PC-9 (cell line): ENCODE measurements at regions of chr18 and their contacts with region 1.

Region 1: GRCh38 chr18:65786422-65786948 is 35.7 kb downstream of the CDH7 start:
- DNase-seq: no peak
- H3K4me3 ChIP-seq: no peak overlapping the region
- H3K27ac ChIP-seq: no peak overlapping the region
- H3K4me1 ChIP-seq: no peaks in the 10 kb centered on the region
- H3K27me3 ChIP-seq: no peaks in the 10 kb centered on the region
- CTCF ChIP-seq: no peak

Region 2: GRCh38 chr18:65721619-65722018 is 64.9 kb before region 1 on chr18:
- CTCF ChIA-PET with region 1: no interaction called
- POLR2A ChIA-PET with region 1: no interaction called
- intact Hi-C with region 1: no loop called
- DNase-seq: no peak
- H3K4me3 ChIP-seq: no peak overlapping the region
- H3K27ac ChIP-seq: no peak overlapping the region
- H3K4me1 ChIP-seq: no peaks in the 10 kb centered on the region
- H3K27me3 ChIP-seq: no peaks in the 10 kb centered on the region
- CTCF ChIP-seq: no peak

Region 3: DNA sequence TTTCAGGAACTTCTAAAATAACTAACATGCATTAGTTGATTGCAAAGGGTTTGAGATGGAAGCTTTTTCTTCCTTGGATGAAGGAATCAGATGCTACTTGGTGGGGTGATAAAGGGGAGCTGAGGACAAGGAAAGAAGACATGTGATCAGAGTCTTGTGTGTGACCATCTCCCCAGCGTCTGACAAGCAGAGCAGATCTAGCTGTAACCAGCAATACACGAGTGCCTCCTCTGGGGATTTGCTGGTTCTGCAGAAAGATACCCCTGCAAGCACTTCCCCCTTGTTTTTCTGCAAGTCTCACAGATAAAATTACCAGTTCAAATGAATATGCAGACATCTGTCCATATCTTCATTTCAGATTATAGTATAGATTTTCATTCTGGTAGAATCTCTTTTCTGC is 33.0 kb before region 1 on chr18:
- CTCF ChIA-PET with region 1: no interaction called
- POLR2A ChIA-PET with region 1: no interaction called
- intact Hi-C with region 1: no loop called
- DNase-seq: no peak
- H3K4me3 ChIP-seq: no peak overlapping the region
- H3K27ac ChIP-seq: no peak overlapping the region
- H3K4me1 ChIP-seq: no peaks in the 10 kb centered on the region
- H3K27me3 ChIP-seq: no peaks in the 10 kb centered on the region
- CTCF ChIP-seq: peak; percentile 56; the same call in 1 of the 2 replicates

Region 4: GRCh38 chr18:66156946-66157687 is 370.6 kb after region 1 on chr18:
- CTCF ChIA-PET with region 1: interaction called, 13 read pairs
- POLR2A ChIA-PET with region 1: no interaction called
- intact Hi-C with region 1: no loop called
- DNase-seq: no peak
- H3K4me3 ChIP-seq: no peak overlapping the region
- H3K27ac ChIP-seq: no peak overlapping the region
- H3K4me1 ChIP-seq: no peaks in the 10 kb centered on the region
- H3K27me3 ChIP-seq: no peaks in the 10 kb centered on the region
- CTCF ChIP-seq: no peak